CD8-positive, alpha-beta T cell (primary cell): ENCODE measurements at regions of chr17 and their contacts with region 1.

Region 1: DNA sequence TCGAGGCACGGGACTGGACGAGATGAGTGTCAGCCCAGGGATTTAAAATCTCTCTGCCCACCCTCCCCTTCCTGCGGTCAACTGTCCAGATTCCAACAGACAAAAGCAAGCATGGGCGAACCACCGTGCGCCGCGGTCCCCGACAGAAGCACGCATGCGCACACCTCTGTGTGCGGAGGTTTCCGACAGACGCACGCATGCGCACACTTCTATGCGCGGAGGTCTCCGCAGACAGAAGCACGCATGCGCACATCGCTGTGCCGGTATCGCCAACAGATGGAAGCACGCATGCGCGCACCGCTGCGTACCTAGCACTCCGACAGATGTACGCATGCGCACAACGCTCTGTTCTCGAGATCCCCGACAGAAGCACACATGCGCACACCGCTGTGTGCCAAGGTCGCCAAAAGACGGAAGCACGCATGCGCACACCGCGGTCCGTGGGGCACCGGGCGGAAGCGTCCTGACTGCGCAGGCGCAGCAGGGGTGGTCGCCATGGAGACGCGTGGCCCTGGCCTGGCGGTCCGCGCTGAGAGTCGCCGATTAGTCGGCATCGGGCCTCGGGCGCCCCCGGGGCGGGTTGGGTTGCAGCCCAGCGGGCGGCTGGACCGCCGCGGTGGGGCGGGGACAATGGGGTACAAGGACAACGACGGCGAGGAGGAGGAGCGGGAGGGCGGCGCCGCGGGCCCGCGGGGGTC is 57.4 kb upstream of the RPH3AL start:
- DNase-seq: peak; percentile 99 to 100 (median 100)
- ATAC-seq: peak; percentile 29
- H3K4me3 ChIP-seq: peak overlapping the region; percentile 72 to 80
- H3K4me3 Mint-ChIP-seq: peak overlapping the region; percentile 95
- H3K27ac ChIP-seq: peak overlapping the region; percentile 89 to 90
- H3K27ac Mint-ChIP-seq: peak overlapping the region; percentile 99
- H3K4me1 ChIP-seq: peaks cover 45% of the 10 kb centered on the region
- H3K4me1 Mint-ChIP-seq: peaks cover 51% of the 10 kb centered on the region
- H3K27me3 ChIP-seq: no peaks in the 10 kb centered on the region
- H3K27me3 Mint-ChIP-seq: no peaks in the 10 kb centered on the region
- CTCF ChIP-seq: no peak

Region 2: GRCh38 chr17:181215-182049 is 228.6 kb before region 1 on chr17 and contains the start of gene DOC2B:
- CTCF ChIA-PET with region 1: no interaction called
- POLR2A ChIA-PET with region 1: no interaction called
- intact Hi-C with region 1: no loop called
- DNase-seq: peak in 2 of 9 experiments; percentile 1 to 17
- ATAC-seq: no peak
- H3K4me3 ChIP-seq: no peak within 1 kb of the TSS
- H3K4me3 Mint-ChIP-seq: peak within 1 kb of the TSS; percentile 66
- H3K27ac ChIP-seq: no peak within 1 kb of the TSS
- H3K27ac Mint-ChIP-seq: no peak within 1 kb of the TSS
- H3K4me1 ChIP-seq: no peaks in the 10 kb centered on the region
- H3K4me1 Mint-ChIP-seq: peaks cover 4% of the 10 kb centered on the region
- H3K27me3 ChIP-seq: peaks cover 11 to 13% of the 10 kb centered on the region in 2 experiments
- H3K27me3 Mint-ChIP-seq: peaks cover 50% of the 10 kb centered on the region
- CTCF ChIP-seq: no peak
- total RNA-seq, gene DOC2B: 0.19 to 0.64 TPM

Region 3: DNA sequence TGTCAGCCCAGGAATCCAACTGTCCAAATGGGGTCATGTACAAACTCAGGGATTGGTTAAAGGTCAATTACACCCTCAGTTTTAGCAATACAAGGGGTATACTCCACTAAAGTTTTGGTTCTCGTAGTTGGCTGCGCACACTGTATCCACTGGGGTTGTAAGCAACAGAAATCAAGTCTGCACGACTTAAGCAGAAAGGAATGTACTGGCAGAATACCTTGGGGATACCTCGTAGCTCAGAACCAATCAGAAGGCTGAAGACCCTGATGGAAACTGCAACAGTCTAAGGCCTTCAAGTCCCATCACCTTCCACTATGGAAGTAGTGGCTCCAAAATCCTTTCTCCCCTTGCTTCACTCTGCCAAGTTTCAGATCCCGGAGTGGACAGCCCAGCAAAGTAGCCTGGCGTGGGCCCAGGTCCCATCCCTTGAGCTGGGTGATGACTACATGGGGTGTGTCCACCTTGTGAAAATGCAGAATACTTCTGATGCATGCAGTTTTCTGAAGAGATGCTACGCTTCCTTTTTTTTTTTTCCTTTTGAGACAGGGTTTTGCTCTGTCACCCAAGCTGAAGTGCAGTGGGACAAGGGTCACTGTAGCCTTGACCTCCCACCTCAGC is 36.3 kb before region 1 on chr17:
- CTCF ChIA-PET with region 1: no interaction called
- POLR2A ChIA-PET with region 1: no interaction called
- intact Hi-C with region 1: no loop called
- DNase-seq: no peak
- ATAC-seq: no peak
- H3K4me3 ChIP-seq: no peak overlapping the region
- H3K4me3 Mint-ChIP-seq: no peak overlapping the region
- H3K27ac ChIP-seq: no peak overlapping the region
- H3K27ac Mint-ChIP-seq: no peak overlapping the region
- H3K4me1 ChIP-seq: no peaks in the 10 kb centered on the region
- H3K4me1 Mint-ChIP-seq: peaks cover 2% of the 10 kb centered on the region
- H3K27me3 ChIP-seq: no peaks in the 10 kb centered on the region
- H3K27me3 Mint-ChIP-seq: peaks cover 2% of the 10 kb centered on the region
- CTCF ChIP-seq: no peak

Region 4: DNA sequence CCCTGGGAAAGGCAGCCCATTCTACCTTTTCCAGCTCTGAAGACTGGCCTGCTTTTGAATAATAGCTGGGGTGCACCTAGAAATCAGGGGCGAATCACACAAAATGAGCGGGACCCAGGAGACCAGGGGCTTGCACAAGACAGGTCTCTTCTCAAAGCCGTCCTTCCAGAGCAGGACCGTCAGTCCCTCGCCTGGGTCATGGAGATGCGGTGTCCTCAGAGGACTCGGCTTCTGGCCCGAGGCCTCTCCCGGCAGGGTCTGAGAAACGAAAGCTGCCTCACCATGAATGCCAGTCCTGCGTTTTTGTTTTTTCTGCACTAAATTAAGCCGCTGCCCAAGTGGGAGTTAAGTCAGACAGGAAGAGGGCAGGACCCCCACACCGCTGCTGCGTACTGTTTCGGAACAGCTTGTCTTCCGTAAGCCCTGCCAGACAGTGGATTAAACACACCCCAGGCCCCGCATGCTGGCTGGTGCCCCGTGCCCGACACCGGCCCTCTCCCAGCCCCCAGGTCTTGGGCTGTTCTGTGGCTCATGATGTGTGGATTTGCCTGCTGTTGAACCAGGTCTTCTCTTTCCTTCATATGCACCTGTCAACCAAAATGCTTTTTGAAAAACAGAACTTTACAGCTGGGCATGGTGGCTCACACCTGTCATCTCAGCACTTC is 84.7 kb after region 1 on chr17:
- CTCF ChIA-PET with region 1: interaction called, 12 read pairs
- POLR2A ChIA-PET with region 1: interaction called, 4 read pairs
- intact Hi-C with region 1: no loop called
- DNase-seq: peak in 4 of 9 experiments; percentile 15 to 53 (median 19)
- ATAC-seq: no peak
- H3K4me3 ChIP-seq: no peak overlapping the region
- H3K4me3 Mint-ChIP-seq: peak overlapping the region; percentile 49
- H3K27ac ChIP-seq: no peak overlapping the region
- H3K27ac Mint-ChIP-seq: peak overlapping the region; percentile 64
- H3K4me1 ChIP-seq: peaks cover 63% of the 10 kb centered on the region
- H3K4me1 Mint-ChIP-seq: peaks cover 43% of the 10 kb centered on the region
- H3K27me3 ChIP-seq: no peaks in the 10 kb centered on the region
- H3K27me3 Mint-ChIP-seq: no peaks in the 10 kb centered on the region
- CTCF ChIP-seq: no peak

Region 5: GRCh38 chr17:688100-688989 is 278.3 kb after region 1 on chr17:
- CTCF ChIA-PET with region 1: interaction called, 10 read pairs
- POLR2A ChIA-PET with region 1: no interaction called
- intact Hi-C with region 1: no loop called
- DNase-seq: peak in 2 of 9 experiments; percentile 11 to 32
- ATAC-seq: no peak
- H3K4me3 ChIP-seq: no peak overlapping the region
- H3K4me3 Mint-ChIP-seq: no peak overlapping the region
- H3K27ac ChIP-seq: no peak overlapping the region
- H3K27ac Mint-ChIP-seq: no peak overlapping the region
- H3K4me1 ChIP-seq: no peaks in the 10 kb centered on the region
- H3K4me1 Mint-ChIP-seq: peaks cover 6% of the 10 kb centered on the region
- H3K27me3 ChIP-seq: no peaks in the 10 kb centered on the region
- H3K27me3 Mint-ChIP-seq: no peaks in the 10 kb centered on the region
- CTCF ChIP-seq: no peak

Region 6: DNA sequence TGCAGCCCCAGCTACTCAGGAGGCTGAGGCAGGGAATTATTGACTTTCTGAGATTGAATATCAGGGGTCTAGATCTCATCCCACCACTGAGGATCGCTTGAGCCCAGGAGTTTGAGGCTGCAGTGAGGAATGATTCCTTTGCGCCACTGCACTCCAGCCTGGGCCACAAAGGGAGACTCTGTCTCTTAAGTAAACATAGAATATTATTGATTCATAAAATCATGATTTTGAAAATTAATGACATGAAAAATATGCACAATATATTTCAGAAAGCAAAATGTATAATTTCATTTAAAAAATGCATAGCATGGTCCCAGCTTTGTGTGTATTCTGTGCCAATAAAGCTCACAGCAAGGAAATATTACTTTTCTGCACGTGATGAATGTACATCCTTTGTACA is 306.2 kb after region 1 on chr17:
- CTCF ChIA-PET with region 1: interaction called, 9 read pairs
- POLR2A ChIA-PET with region 1: no interaction called
- intact Hi-C with region 1: loop called in 1 of 2 experiments (anchors 1 kb)
- DNase-seq: no peak
- ATAC-seq: no peak
- H3K4me3 ChIP-seq: no peak overlapping the region
- H3K4me3 Mint-ChIP-seq: no peak overlapping the region
- H3K27ac ChIP-seq: no peak overlapping the region
- H3K27ac Mint-ChIP-seq: no peak overlapping the region
- H3K4me1 ChIP-seq: peaks cover 18% of the 10 kb centered on the region
- H3K4me1 Mint-ChIP-seq: peaks cover 31% of the 10 kb centered on the region
- H3K27me3 ChIP-seq: no peaks in the 10 kb centered on the region
- H3K27me3 Mint-ChIP-seq: no peaks in the 10 kb centered on the region
- CTCF ChIP-seq: no peak

Region 7: DNA sequence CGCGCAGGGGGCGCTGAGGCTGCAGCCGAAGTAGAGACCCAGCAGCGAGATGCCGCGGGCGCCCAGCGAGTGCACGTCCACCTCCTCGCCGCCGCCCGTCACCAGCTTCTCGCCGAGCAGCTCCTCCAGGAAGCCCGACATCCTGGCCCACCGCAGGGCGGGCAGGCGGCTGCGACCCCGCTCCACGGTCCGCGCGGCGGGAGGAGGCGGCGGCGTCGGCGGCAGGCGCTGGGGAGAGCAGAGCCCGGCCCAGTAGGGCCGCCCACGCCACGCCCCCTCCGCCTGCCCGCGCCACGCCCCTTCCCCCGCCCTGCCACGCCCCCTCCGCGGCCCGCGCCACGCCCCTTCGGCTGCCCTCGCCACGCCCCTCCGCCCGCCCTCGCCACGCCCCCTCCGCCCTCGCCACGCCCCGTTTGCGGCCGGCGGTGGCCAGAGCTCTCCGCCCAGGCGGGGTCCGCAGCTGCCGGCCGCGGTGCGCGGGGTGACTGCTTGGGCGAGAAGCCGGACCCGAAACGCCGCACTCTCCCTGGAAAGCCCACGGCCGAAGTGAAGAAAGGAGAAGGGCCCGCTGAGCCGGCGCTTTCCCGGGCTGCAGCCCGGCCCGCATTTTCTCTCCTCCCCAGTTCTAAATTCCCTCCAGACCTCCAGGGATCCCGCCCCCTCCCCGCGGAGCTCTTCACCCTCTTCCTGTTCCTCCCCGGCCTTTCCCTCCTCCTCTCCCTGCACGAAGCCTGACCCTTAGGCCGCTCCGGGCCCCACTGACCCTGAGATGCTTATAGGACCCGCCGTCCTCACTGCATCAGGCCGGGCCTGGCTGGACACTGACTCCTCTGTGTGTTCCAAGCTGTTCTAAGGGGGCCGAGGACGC is 569.8 kb after region 1 on chr17 and contains the start of gene NXN:
- CTCF ChIA-PET with region 1: interaction called, 11 read pairs
- POLR2A ChIA-PET with region 1: no interaction called
- intact Hi-C with region 1: loop called (anchors 1 kb)
- DNase-seq: peak; percentile 81 to 96 (median 90)
- ATAC-seq: peak; percentile 86
- H3K4me3 ChIP-seq: peak within 1 kb of the TSS; percentile 53 to 58
- H3K4me3 Mint-ChIP-seq: peak within 1 kb of the TSS; percentile 78
- H3K27ac ChIP-seq: no peak within 1 kb of the TSS
- H3K27ac Mint-ChIP-seq: peak within 1 kb of the TSS; percentile 15
- H3K4me1 ChIP-seq: peaks cover 18% of the 10 kb centered on the region
- H3K4me1 Mint-ChIP-seq: peaks cover 19% of the 10 kb centered on the region
- H3K27me3 ChIP-seq: peaks cover 16 to 17% of the 10 kb centered on the region in 2 experiments
- H3K27me3 Mint-ChIP-seq: peaks cover 32% of the 10 kb centered on the region
- CTCF ChIP-seq: no peak
- total RNA-seq, gene NXN: 0.17 to 0.95 TPM